Activated CD4-positive, alpha-beta T cell treated with anti-CD3 and anti-CD28 coated beads, Interleukin-2, amount 10 ng/mL, durations not matched to agents 24 days and 14 days (primary cell): ENCODE measurements at regions of chr11 and their contacts with region 1.

Region 1: DNA sequence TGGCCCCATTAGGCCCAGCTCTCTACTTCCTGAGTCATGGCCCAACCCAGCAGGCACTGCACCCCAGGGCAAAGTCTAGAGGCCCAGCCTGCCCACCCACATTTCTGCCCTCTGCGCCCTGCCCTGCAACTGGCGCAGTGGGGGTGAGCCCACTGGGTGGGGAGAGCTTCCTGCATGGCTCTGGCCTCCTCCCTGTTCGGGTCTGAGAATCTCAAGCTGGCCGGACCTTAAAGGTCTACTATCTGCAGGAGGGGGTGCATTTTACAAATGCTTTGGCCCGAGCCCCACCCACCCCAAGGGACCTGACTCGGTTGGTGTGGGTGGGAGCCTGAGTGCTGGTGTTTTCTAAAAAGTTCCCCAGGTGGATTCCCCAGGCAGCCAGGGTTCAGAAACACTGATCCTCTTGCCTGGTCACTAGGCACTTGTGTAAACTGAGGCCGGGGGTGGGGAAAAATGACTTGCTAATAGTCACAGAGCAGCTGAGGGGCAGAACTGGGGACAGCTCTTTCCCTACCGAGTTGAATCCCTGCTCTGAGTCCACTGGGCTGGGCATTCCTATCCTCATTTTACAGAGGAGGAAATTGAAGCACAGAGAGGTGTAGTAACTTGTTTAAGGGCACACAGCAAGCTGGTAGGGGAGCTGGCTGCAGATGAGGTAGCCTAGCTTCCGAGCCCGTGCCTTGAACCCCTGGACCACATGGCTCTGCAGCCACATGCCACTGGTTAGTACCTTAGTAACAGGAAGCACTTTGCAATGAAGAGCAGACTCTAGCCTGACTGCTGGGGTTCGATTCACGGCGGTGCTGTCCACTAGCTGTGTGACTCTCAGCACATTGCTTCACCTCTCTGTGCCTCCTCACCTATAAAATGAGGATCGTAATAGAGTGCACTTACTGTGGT is 36.3 kb downstream of the CD82 start:
- DNase-seq: no peak
- H3K4me3 Mint-ChIP-seq: peak overlapping the region; percentile 44
- H3K27ac Mint-ChIP-seq: peak overlapping the region; percentile 88
- H3K4me1 Mint-ChIP-seq: peaks cover 55% of the 10 kb centered on the region
- H3K27me3 Mint-ChIP-seq: no peaks in the 10 kb centered on the region

Region 2: GRCh38 chr11:44611687-44612434 is 10.1 kb after region 1 on chr11:
- intact Hi-C with region 1: loop called (anchors 1 kb)
- DNase-seq: peak; percentile 89
- H3K4me3 Mint-ChIP-seq: peak overlapping the region; percentile 46
- H3K27ac Mint-ChIP-seq: peak overlapping the region; percentile 88
- H3K4me1 Mint-ChIP-seq: peaks cover 73% of the 10 kb centered on the region
- H3K27me3 Mint-ChIP-seq: no peaks in the 10 kb centered on the region